GM10248 (cell line): ENCODE measurements at regions of chr20 and their contacts with region 1.

Region 1: GRCh38 chr20:37192137-37192854 is 12.9 kb upstream of the MROH8 start:
- DNase-seq: peak; percentile 79
- CTCF ChIP-seq: peak; percentile 81

Region 2: GRCh38 chr20:36384022-36384619 is 808.2 kb before region 1 on chr20:
- CTCF ChIA-PET with region 1: no interaction called
- POLR2A ChIA-PET with region 1: no interaction called
- DNase-seq: peak; percentile 51
- CTCF ChIP-seq: no peak

Region 3: DNA sequence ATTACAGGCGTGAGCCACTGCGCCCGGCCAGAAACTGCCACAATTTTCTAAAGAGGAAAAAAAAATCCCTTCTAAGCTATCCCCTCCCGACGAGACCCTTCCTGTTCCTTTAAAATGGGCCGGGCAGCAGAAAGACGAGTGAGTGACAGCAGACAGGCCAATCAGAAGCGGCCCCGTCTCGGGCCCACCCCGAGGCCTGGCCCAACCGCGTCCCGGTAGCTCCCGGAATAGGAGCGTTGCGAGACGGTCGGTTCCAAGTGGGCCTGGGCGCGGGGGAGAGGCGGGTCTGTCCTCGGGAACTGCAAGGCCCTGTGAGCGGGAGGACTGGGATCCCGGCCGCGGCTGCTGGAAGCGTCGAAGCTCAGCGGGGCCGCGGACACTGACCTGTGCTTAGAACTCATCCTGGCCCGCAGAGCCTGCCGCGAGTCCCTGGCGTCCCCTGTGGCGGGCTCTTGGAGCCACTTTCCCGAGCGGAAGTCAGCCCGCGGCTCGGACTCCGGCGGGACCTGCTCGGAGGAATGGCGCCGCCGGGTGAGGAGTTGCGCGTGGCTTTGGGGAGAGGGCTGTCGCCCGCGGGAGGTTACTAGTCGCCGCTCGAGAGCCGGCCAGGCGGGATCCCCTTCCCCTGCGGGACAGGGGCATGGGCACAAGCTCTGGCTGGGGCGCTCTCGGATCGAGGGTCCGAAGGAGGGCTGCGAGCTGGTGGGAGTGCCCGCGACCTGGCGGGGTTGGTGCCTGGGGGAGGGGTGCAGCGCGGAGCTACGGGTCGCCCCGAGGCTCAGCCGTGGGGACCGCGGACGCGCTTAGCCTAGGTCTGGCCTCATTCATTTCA is 13.2 kb before region 1 on chr20 and contains the starts of genes MROH8 and RPN2:
- CTCF ChIA-PET with region 1: interaction called, 65 read pairs
- POLR2A ChIA-PET with region 1: interaction called, 5 read pairs
- DNase-seq: peak; percentile 96
- CTCF ChIP-seq: no peak

Region 4: GRCh38 chr20:37209661-37210314 is 17.5 kb after region 1 on chr20:
- CTCF ChIA-PET with region 1: interaction called, 44 read pairs
- POLR2A ChIA-PET with region 1: no interaction called
- DNase-seq: no peak
- CTCF ChIP-seq: no peak

Region 5: DNA sequence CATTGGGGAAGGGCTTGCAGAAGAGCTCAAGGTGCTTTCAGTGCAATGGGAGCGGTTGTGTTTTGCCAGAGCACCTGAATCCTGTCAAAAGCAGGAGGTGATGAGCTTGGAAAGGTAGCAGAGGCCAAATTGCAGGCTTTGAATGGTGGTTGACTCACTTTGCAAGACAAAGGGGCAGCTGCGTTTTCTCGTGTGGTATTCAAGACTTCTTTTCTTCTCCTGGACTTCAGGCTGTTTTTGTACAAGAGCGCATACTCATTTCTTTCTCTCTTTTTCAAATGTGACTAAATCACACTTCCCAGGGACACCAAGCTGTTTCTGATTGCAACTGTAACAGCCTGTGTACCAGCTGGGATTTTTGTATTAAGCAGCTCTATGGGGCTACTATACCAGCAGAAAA is 37.1 kb after region 1 on chr20:
- CTCF ChIA-PET with region 1: interaction called, 20 read pairs
- POLR2A ChIA-PET with region 1: no interaction called
- DNase-seq: no peak
- CTCF ChIP-seq: no peak

Region 6: DNA sequence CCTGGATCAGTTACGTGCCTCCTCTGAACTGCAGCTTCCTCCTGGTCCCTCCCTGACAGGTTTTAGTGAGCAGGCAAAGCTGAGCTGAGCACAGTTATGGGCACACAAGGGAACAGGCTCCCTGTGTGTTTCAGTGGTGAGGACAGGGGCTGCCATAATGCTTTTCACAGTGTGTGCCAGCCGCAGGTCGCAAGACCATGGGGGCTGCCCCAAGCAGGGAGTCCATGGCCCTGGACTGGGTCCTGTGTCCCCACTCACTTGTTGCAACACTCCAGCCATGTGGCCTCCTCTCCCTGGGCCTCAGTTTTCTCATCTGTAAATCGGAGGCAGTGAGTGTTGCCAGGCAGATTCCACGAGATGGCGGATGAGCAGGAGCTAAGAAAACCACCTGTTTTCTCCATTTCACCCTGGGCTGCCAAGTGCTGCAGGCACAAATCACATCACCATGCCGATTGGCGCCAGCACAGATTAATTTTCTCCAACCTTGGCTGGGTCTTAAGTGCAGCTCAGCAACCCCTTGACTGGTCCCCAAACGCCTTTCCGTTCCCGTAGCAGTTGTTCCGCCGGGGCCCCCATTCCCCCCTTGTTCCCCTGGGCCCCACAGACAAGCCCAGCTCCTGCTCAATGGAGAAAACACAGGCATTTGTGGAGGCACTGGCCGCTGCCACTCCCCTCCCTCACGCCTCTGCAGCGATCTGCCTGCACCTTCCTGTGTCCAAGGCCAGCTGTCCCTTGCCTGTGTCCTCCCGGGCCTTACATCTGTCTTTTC is 271.6 kb after region 1 on chr20:
- CTCF ChIA-PET with region 1: no interaction called
- POLR2A ChIA-PET with region 1: no interaction called
- DNase-seq: no peak
- CTCF ChIP-seq: no peak

Region 7: GRCh38 chr20:37542281-37542680 is 350.0 kb after region 1 on chr20:
- CTCF ChIA-PET with region 1: interaction called, 10 read pairs
- POLR2A ChIA-PET with region 1: no interaction called
- DNase-seq: no peak
- CTCF ChIP-seq: no peak